Activated CD4-positive, alpha-beta T cell treated with anti-CD3 and anti-CD28 coated beads, Interleukin-2, amount 10 ng/mL, durations not matched to agents 24 days and 14 days (primary cell): ENCODE measurements at regions of chr9 and their contacts with region 1.

Region 1: DNA sequence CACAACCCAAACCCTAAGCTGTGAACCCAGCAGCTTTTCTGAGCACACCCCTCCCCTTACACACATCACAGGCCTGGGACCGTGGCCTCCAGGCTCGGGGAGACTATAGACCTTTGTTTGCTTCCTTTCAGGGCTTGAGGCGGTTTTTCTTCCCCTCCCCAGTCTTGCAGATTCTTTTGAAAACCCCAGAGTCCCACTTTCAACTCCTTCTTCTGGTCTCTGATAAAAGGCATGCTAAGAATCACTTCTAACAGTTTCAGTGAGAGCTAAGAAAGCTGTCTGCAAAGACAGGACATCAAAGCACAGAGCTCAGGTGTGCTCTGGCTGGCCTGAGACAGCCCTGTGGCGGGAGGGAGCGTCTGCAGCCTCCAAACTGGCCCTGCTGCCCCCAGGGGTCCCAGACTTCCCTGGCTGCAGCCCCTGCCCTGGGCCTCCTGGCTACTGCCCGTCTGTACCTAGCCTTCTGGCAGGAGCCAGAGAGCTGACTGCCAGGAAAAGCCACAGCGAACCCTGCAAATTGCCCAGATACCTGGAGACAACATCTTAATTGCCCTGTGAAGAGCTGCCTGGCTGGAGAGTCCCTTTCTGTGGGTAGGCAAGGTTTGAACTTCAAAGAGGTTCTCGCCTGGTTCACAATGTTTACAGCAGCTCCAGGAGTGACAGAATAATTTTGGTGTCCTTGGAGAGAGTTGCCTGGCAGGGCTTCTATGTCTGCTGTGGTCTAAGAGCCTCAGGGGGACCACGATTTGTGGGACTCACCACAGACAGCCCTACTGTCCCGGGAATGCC is 139.0 kb downstream of the GADD45G start:
- DNase-seq: peak; percentile 94
- H3K4me3 Mint-ChIP-seq: peak overlapping the region; percentile 67
- H3K27ac Mint-ChIP-seq: peak overlapping the region; percentile 87
- H3K4me1 Mint-ChIP-seq: peaks cover 80% of the 10 kb centered on the region
- H3K27me3 Mint-ChIP-seq: no peaks in the 10 kb centered on the region

Region 2: GRCh38 chr9:89295400-89295799 is 448.4 kb before region 1 on chr9:
- intact Hi-C with region 1: no loop called
- DNase-seq: peak; percentile 39
- H3K4me3 Mint-ChIP-seq: no peak overlapping the region
- H3K27ac Mint-ChIP-seq: no peak overlapping the region
- H3K4me1 Mint-ChIP-seq: no peaks in the 10 kb centered on the region
- H3K27me3 Mint-ChIP-seq: peaks cover 12% of the 10 kb centered on the region

Region 3: GRCh38 chr9:89825669-89826068 is 81.9 kb after region 1 on chr9:
- intact Hi-C with region 1: loop called (anchors 5 kb)
- DNase-seq: no peak
- H3K4me3 Mint-ChIP-seq: no peak overlapping the region
- H3K27ac Mint-ChIP-seq: no peak overlapping the region
- H3K4me1 Mint-ChIP-seq: peaks cover 21% of the 10 kb centered on the region
- H3K27me3 Mint-ChIP-seq: peaks cover 5% of the 10 kb centered on the region